Panc1 (cell line): ENCODE measurements at regions of chr5 and their contacts with region 1.

Region 1: GRCh38 chr5:63794296-63794695 is 167.9 kb downstream of the HTR1A start:
- DNase-seq: no peak
- ATAC-seq: no peak
- H3K4me3 ChIP-seq: no peak overlapping the region
- H3K27ac ChIP-seq: no peak overlapping the region
- H3K4me1 ChIP-seq: no peaks in the 10 kb centered on the region
- H3K27me3 ChIP-seq: no peaks in the 10 kb centered on the region
- CTCF ChIP-seq: no peak

Region 2: DNA sequence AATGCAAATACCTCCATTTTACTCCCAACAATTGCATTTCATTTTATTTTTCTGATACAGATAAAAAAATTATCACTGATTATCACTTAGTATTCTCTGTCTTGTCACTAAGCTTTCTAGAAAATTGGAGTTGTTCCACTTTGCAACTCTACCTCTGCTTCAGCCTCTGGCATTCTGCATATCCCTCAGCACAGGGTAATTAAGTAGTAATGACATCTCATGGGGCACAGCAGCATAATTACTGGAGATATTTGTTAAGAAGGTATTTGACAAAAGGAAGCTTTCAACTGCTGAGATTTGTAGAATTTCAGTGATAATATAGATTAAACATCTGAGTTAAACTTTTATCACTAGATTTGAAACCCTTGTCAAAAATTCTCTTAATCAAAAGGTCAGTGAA is 278.3 kb before region 1 on chr5:
- CTCF ChIA-PET with region 1: no interaction called
- POLR2A ChIA-PET with region 1: no interaction called
- in situ Hi-C with region 1: no loop called
- intact Hi-C with region 1: no loop called
- DNase-seq: no peak
- ATAC-seq: no peak
- H3K4me3 ChIP-seq: no peak overlapping the region
- H3K27ac ChIP-seq: no peak overlapping the region
- H3K4me1 ChIP-seq: no peaks in the 10 kb centered on the region
- H3K27me3 ChIP-seq: no peaks in the 10 kb centered on the region
- CTCF ChIP-seq: no peak

Region 3: DNA sequence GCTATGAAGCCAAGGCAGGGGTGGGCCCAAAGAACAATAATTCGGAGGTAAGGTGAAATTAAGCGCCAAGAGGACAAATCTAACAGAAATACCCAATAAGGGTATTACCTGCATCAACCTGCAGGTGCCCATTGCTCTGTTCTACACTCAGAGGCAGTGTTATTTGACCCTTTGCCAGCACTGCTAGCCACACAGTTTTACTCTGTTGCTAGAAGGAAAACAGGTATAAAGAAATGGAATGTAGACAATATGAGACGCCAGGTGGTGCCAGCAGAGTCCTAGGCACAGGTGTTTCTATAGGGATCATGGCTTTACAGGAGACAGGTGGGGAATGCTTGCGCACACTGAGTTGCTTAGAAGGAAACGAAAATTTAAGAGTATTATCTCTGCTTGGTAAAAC is 33.3 kb before region 1 on chr5:
- CTCF ChIA-PET with region 1: no interaction called
- POLR2A ChIA-PET with region 1: interaction called, 12 read pairs
- in situ Hi-C with region 1: no loop called
- intact Hi-C with region 1: no loop called
- DNase-seq: no peak
- ATAC-seq: no peak
- H3K4me3 ChIP-seq: no peak overlapping the region
- H3K27ac ChIP-seq: no peak overlapping the region
- H3K4me1 ChIP-seq: no peaks in the 10 kb centered on the region
- H3K27me3 ChIP-seq: no peaks in the 10 kb centered on the region
- CTCF ChIP-seq: no peak